ENCODE measurements at regions of chr9 and their contacts with region 1.

Region 1: DNA sequence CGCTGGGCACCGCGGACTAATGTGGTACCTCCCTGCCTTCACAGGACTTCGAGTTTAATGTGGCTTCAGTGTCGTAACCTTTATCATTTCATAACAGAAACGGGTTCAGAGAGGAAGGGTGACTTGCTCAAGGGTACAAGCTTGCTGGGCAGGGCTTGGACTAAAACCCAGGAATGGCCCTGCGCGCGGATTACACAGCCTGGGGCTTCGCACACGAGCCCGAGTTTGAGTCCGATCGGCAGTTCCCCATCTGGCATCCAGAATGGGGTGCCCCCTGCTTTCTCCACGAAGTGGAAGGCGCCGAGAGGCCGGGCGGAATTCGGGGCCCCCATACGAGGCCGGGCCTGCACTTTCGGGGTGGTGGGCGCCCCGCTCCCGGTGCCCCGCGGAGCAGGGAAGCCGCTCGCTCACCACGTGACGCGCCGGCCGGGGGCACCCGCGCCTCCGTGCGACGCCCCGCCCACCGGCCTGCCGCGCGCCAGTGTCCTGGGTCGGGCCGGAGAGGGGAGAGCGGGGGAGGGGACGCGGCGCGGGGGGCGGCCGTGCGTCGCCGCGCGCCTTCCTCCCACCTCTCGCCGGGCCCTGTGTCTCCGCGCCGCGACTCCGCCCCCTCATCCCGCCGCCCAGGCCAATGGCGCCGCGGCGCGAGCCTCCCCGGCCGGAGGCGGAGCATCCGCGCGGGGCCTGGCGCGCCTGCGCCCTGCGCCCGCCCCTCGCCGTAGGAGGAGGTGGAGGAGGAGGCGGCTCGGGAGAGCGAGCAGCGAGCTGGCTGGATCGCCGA is at the start of gene SET:
- DNase-seq: peak; percentile 97

Region 2: DNA sequence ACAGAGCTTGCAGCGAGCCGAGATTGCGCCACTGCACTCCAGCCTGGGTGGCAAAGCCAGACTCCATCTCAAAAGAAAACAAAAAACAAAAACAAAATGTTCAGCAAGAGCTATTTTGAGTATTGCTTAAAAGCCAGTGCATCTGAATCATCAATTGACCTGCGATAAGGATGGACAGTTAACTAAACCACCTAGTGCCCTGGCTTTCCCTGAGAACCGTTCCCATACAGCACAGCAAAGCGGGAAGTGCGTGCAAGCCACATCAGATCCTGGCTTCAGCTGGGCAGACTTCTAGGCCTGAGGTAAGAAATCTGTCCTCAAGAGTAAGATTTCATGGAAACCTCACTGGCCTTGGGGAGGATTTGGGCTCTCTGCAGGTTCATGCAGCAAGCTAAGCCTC is 34.8 kb before region 1 on chr9:
- CTCF ChIA-PET with region 1: interaction called, 6 read pairs
- POLR2A ChIA-PET with region 1: interaction called, 10 read pairs
- DNase-seq: no peak

Region 3: GRCh38 chr9:128675382-128675781 is 13.3 kb before region 1 on chr9:
- CTCF ChIA-PET with region 1: interaction called, 3 read pairs
- POLR2A ChIA-PET with region 1: interaction called, 21 read pairs
- DNase-seq: no peak

Region 4: DNA sequence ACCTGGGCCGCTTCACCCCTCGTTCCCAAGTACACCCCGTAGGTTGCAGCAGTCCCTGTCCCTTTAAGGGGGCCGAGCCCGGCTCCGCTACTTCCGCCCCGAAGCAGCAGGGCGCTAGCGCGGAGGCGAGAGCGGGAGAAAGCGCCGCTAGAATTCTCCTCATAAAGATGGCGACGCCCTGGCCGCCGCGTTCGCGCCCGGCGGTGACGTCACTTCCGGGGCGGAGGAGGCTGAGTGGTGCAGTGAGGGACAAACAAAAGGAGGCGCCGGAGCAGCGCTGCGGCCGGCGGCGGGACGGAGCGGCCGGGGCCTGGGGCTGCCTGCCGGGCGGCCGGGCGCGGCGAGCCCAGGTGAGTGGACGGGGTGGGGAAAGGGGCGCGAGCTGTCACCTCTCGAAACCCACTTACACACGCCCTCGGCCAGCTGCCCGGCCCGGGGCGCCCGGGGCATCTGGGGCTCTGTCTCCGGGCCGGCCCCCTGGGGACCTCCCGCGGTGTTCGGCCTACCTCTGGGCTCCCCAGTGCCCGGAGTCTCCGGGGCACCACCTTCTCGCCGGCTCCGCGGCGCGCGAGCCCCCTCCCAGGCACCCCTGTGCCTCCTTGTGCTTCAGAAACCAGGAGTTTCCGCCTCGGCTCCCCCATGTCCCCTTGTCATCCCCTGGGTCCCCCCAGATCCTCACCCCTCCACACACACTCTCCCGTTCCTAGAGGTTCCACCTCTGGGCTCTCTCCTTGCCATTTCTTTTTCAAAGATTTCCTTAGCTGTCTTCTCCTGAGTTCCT is 193.4 kb after region 1 on chr9 and contains the starts of genes KYAT1 and LRRC8A:
- CTCF ChIA-PET with region 1: no interaction called
- POLR2A ChIA-PET with region 1: no interaction called
- DNase-seq: peak; percentile 97

Region 5: DNA sequence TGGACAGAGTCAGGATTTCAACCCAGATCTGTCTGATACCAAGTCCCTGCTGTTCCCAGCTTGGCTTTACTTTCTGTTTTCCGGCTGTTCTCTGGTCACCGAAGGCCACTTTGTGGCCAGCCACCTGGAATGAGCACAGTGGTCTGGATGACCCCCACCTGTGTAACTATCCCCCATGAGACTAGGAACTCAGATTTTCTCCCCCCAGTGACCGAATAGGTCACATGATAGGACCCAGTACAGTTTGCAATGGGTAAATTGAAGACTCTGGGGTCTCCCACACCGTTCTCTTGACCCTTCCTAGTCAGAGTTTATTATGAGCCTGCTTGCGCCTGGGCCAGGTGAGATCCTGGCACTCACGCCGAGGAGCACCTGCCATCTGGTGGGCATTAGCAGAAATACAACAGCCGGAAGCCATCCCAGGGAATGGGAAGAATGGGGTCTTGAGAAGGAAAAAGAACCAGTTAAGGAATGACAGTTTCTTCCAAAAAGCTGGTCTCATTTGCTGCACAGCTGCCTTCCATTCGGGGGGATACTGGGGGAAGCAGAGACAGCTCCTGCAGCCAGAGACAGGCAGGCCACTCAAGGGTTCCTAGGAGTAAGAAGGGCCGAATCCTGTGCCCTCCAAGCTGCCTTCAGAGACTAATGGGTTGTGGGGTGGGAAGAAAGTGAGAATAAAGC is 239.2 kb after region 1 on chr9:
- CTCF ChIA-PET with region 1: no interaction called
- POLR2A ChIA-PET with region 1: no interaction called
- DNase-seq: peak; percentile 73

Measured in HEK293T (cell line).